ENCODE measurements at regions of chr12 and their contacts with region 1.

Region 1: GRCh38 chr12:17609721-17610120 is 480.3 kb downstream of the RERGL start:
- DNase-seq: no peak

Region 2: GRCh38 chr12:16136219-16136988 is 1473.3 kb before region 1 on chr12:
- intact Hi-C with region 1: loop called in 1 of 2 experiments (anchors 10 kb)
- DNase-seq: no peak

Region 3: DNA sequence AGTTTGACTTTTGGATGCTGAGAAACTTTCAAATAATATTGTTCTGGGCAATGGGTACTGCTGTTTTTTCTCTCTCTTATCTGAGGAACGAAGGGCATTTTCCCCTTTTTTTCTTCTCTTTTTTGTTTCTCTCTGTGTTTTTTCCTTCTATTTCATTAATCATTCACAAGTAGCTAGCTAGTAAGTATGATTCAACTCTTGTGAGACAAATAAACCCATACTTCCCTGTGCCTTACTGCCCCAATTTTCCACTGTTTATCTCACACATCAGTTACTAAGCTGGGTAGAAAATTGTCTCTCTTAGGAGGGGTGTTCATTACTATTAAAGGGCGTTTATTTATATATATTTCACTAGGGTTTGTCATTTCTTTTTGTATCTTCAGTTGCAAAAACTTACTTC is 42.7 kb after region 1 on chr12:
- intact Hi-C with region 1: no loop called
- DNase-seq: no peak

Region 4: DNA sequence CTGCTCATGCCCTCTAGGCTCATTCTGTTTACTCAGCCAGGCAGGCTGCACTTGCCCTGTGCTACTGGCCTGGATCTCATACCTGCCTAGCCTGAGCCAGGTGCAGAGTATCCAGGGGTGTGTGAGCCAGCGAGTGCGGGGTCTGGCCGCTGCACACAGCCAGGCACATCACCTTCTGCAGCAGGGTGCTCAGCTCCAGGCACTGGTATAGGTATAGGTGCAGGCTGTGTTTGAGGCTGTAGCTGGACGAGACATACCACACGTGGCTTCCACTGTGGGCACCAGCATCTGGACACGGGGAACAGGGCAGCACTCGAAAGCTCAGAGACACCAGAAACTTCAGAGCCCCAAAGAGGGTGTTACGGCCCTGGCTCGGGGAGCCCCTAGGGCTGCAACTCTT is 56.1 kb after region 1 on chr12:
- intact Hi-C with region 1: no loop called
- DNase-seq: no peak

Measured in posterior vena cava (tissue), 2 donors.